Activated naive CD4-positive, alpha-beta T cell treated with anti-CD3 and anti-CD28 coated beads for 36 hours (primary cell): ENCODE measurements at regions of chr3 and their contacts with region 1.

Region 1: DNA sequence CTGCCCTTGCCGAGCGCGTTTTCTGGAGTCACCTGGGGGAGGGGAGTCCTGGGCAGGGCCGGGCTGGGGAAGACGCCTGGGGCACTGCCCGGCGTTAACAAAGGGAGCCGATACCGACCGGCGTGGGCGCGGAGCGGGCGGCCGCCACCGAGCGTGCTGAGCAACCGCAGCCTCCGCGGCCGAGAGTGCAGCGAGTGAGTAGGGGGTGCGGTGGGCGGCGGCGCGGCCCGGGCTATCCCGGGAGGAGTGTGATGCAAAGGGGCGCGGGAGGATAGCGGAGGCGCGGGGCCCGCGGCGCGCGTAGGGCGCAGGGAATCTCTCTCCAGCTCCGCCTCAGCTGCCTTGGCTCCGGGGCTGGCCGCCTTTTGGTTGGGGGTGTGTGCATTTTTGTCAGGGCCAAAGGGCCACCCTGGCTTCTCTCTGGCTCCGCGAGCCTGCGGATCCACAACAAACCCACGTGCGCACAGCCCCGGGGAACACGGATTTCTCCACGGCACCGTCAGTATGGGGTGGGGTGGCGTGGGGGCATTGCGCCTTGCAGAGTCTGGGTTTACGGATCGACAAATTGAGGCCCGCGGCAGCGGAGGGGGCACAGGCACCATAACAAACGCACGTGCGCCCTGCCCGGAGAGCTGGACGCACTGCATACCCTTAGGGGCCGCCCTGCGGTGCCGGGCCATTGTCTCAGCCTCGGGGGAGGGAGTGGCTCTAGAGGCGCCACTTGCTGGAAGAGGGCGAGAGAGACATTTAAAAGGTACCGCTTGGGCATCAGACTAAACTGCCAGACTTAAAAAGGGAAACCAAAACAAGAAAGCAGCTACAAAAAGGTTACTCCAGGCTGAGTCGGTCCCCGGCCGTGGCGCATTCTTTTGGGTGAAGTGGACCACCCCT is 560 bp downstream of the ST6GAL1 start:
- DNase-seq: peak; percentile 74
- H3K4me3 Mint-ChIP-seq: peak overlapping the region; percentile 83
- H3K27ac Mint-ChIP-seq: peak overlapping the region; percentile 85
- H3K4me1 Mint-ChIP-seq: peaks cover 22% of the 10 kb centered on the region
- H3K27me3 Mint-ChIP-seq: no peaks in the 10 kb centered on the region

Region 2: DNA sequence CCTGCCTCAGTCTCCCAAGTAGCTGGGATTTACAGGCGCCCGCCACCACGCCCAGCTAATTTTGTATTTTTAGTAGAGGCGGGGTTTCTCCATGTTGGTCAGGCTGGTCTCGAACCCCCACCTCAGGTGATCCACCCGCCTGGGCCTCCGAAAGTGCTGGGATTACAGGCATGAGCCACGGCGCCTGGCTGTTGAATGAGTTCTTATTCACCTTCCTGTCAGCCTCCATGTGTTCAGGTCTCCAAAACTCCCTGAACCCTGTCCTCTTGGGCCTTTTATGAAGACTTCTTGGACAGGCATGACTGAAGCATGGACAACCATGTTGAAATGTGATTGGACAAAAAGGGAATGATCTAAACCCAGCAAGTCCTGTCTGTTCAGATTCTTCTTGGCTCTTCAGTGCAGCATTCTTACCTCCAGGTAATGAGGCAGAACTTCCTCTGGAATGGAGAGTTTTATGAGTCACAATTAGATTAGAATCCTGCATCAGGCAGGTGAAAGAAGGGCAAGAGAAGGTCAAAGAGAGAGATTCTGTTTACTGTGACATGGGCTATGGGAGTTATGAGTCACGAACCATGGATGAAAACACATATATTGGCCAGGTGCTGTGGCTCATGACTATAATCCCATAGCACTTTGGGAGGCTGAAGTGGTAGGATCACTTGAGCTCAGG is 170.6 kb before region 1 on chr3:
- CTCF ChIA-PET with region 1: no interaction called
- intact Hi-C with region 1: no loop called
- DNase-seq: no peak
- H3K4me3 Mint-ChIP-seq: no peak overlapping the region
- H3K27ac Mint-ChIP-seq: no peak overlapping the region
- H3K4me1 Mint-ChIP-seq: peaks cover 6% of the 10 kb centered on the region
- H3K27me3 Mint-ChIP-seq: no peaks in the 10 kb centered on the region

Region 3: DNA sequence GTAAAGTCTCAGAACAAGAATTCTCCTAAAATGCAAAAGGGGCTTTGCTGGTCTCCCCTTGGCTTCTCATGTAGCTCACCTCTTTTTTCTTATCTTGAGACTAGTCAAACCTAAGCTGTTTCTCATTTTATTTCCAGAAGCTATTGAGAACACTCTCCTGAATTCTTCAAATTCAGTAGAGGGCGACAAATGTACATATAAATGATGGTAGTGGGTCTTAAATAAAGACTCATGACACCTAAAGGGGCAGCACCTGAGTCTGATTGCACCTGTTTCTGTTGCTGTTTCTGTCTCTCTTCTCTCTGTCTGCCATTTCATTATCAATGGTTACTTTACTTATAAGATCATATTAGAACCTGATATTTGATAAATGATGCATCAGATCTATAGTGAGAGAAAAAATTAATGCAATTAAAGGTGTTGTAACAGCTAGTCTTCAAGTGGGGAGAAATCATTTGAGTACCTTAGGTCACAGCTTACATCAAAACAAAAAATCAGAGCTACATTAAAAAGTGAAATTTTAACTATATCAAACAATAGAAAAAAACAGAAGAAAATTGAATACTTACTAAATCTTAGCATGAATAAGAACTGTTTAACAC is 81.4 kb before region 1 on chr3:
- CTCF ChIA-PET with region 1: interaction called, 28 read pairs
- intact Hi-C with region 1: loop called (anchors 1 kb)
- DNase-seq: peak; percentile 45
- H3K4me3 Mint-ChIP-seq: no peak overlapping the region
- H3K27ac Mint-ChIP-seq: no peak overlapping the region
- H3K4me1 Mint-ChIP-seq: peaks cover 12% of the 10 kb centered on the region
- H3K27me3 Mint-ChIP-seq: peaks cover 3% of the 10 kb centered on the region

Region 4: GRCh38 chr3:186909078-186909853 is 21.6 kb before region 1 on chr3:
- CTCF ChIA-PET with region 1: interaction called, 3 read pairs
- intact Hi-C with region 1: loop called (anchors 1 kb)
- DNase-seq: peak; percentile 85
- H3K4me3 Mint-ChIP-seq: peak overlapping the region; percentile 47
- H3K27ac Mint-ChIP-seq: peak overlapping the region; percentile 87
- H3K4me1 Mint-ChIP-seq: peaks cover 18% of the 10 kb centered on the region
- H3K27me3 Mint-ChIP-seq: no peaks in the 10 kb centered on the region

Region 5: GRCh38 chr3:187011915-187012314 is 81.0 kb after region 1 on chr3:
- CTCF ChIA-PET with region 1: no interaction called
- intact Hi-C with region 1: loop called (anchors 1 kb)
- DNase-seq: no peak
- H3K4me3 Mint-ChIP-seq: no peak overlapping the region
- H3K27ac Mint-ChIP-seq: peak overlapping the region; percentile 87
- H3K4me1 Mint-ChIP-seq: peaks cover 63% of the 10 kb centered on the region
- H3K27me3 Mint-ChIP-seq: no peaks in the 10 kb centered on the region

Region 6: DNA sequence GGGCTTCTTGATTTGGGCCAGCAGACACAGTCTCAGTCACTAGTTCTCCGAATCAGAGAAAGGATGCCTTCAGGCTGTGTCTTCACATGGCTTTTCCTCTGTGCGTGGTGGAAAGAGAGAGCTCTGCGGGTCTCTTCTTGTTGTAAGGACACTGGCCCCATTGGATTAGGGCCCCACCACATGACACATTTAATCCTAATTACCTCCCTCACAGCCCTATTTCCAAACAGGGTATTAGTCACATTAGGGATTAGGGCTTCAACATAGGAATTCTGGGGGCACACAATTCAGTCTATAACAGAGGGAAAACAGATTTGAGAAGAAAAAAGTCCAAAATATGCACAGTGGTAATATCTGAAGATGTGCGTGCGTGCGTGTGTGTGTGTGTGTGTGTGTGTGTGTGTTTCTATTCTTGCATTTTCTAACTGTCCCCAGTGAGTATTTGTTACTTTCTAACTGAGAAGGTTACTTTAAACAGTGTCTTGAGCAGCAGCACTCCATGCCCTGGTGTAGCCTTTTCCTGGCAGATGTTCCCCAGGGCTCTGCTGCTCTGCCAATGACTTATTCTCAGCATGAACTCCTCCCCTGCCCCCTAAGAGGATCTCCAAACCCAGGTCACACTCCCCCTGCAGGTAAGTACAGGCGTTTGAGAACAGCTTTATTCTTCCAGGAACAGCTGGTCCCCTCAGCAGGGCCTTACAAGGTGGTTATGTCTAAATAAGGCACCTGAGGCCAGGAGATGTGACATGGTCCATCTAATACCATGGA is 135.5 kb after region 1 on chr3:
- CTCF ChIA-PET with region 1: interaction called, 3 read pairs
- intact Hi-C with region 1: loop called (anchors 2 kb)
- DNase-seq: peak; percentile 66
- H3K4me3 Mint-ChIP-seq: no peak overlapping the region
- H3K27ac Mint-ChIP-seq: peak overlapping the region; percentile 79
- H3K4me1 Mint-ChIP-seq: peaks cover 66% of the 10 kb centered on the region
- H3K27me3 Mint-ChIP-seq: no peaks in the 10 kb centered on the region

Region 7: GRCh38 chr3:187336322-187336721 is 405.4 kb after region 1 on chr3:
- CTCF ChIA-PET with region 1: no interaction called
- intact Hi-C with region 1: no loop called
- DNase-seq: no peak
- H3K4me3 Mint-ChIP-seq: no peak overlapping the region
- H3K27ac Mint-ChIP-seq: no peak overlapping the region
- H3K4me1 Mint-ChIP-seq: no peaks in the 10 kb centered on the region
- H3K27me3 Mint-ChIP-seq: peaks cover 2% of the 10 kb centered on the region